ENCODE measurements at regions of chr7 and their contacts with region 1.

Region 1: GRCh38 chr7:91869661-91870060 is 10.8 kb downstream of the MTERF1 start:
- DNase-seq: no peak
- H3K4me3 ChIP-seq: no peak overlapping the region
- H3K27ac ChIP-seq: no peak overlapping the region
- H3K27me3 ChIP-seq: no peaks in the 10 kb centered on the region
- CTCF ChIP-seq: no peak

Region 2: GRCh38 chr7:90178679-90179278 is 1690.9 kb before region 1 on chr7:
- CTCF ChIA-PET with region 1: interaction called, 10 read pairs
- POLR2A ChIA-PET with region 1: no interaction called
- DNase-seq: no peak
- H3K4me3 ChIP-seq: no peak overlapping the region
- H3K27ac ChIP-seq: no peak overlapping the region
- H3K27me3 ChIP-seq: no peaks in the 10 kb centered on the region
- CTCF ChIP-seq: no peak

Region 3: GRCh38 chr7:91826377-91826776 is 43.3 kb before region 1 on chr7:
- CTCF ChIA-PET with region 1: interaction called, 17 read pairs
- POLR2A ChIA-PET with region 1: no interaction called
- DNase-seq: no peak
- H3K4me3 ChIP-seq: no peak overlapping the region
- H3K27ac ChIP-seq: no peak overlapping the region
- H3K27me3 ChIP-seq: no peaks in the 10 kb centered on the region
- CTCF ChIP-seq: no peak

Region 4: GRCh38 chr7:91843831-91844230 is 25.8 kb before region 1 on chr7:
- CTCF ChIA-PET with region 1: no interaction called
- POLR2A ChIA-PET with region 1: no interaction called
- DNase-seq: no peak
- H3K4me3 ChIP-seq: no peak overlapping the region
- H3K27ac ChIP-seq: no peak overlapping the region
- H3K27me3 ChIP-seq: no peaks in the 10 kb centered on the region
- CTCF ChIP-seq: no peak

Measured in AG04450 (cell line).